ENCODE measurements at regions of chr4 and their contacts with region 1.

Region 1: DNA sequence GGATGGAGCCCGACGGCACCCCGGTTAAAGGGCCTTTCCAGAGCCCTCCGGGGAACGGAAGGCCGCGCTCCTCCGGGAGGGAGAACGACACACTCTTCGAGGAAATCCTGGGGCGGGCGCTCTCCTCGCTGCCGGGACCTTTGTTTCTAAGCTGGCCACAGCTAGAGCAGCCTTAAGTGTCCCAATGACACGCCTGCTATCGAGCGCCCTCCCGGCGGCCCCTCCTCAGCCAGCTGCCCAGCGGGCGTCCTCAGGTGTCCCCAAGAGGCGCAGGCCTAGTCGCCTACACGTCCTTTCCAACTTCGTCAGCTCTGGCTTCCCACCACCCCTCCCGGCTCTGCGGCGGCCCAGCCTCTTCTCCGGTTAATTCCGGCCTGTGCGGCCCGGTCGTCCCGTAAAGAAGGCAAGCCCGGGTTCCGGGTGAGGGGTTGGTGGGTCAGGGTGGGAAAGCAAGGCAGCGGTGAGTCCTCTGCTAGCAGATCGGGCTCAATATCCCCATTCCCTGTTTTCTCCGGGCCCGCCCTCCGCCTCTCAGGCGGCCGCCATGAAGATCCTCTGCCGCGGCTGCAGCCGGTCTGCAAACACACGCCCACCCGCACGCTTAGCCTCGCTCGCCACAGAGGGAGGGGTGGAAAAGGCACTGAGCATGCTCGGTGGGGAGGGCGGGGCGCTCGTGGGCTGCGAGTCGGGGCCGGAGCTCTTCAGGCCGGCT is 449 bp upstream of the RAP1GDS1 start:
- DNase-seq: peak; percentile 95
- H3K4me3 Mint-ChIP-seq: peak overlapping the region; percentile 89
- H3K27ac Mint-ChIP-seq: peak overlapping the region; percentile 86
- H3K4me1 Mint-ChIP-seq: peaks cover 35% of the 10 kb centered on the region
- H3K27me3 Mint-ChIP-seq: no peaks in the 10 kb centered on the region
- CTCF ChIP-seq: no peak

Region 2: DNA sequence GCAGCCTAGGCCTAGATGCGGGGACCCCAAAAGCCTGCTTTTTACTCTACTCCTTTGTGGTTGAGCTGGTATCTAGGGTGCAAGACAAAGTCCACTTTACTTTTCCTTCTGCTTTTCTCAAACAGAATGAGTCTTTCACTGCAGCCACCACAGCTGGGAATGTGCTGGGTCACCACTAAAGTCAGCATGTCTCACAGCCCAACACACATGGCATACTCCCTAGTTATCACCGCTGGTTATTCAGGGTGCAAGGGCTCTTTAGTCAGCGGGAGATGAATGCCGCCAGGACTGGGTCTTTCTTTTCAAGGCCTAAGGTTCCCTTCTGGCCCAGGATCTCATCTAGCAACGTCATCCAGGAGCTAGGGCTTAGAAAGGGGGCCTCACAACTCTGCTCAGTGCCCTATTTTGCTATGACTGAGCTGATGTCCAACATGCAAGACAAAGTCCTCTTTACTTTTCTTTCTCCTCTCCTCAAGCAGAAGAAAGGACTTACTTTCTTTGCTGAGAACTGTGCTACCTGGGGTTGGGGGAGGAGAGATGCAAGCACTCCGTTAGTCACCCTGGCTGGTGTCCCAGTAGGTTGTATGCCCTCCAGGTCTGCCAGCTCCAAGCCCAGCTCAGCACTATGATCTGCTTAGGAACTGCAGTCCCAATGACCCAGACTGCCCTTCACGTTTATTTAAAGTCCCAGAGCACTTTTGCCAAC is 94.6 kb before region 1 on chr4:
- CTCF ChIA-PET with region 1: interaction called, 3 read pairs
- POLR2A ChIA-PET with region 1: interaction called, 35 read pairs
- intact Hi-C with region 1: loop called (anchors 2 kb)
- DNase-seq: peak; percentile 93
- H3K4me3 Mint-ChIP-seq: no peak overlapping the region
- H3K27ac Mint-ChIP-seq: peak overlapping the region; percentile 35
- H3K4me1 Mint-ChIP-seq: peaks cover 9% of the 10 kb centered on the region
- H3K27me3 Mint-ChIP-seq: no peaks in the 10 kb centered on the region
- CTCF ChIP-seq: no peak

Region 3: GRCh38 chr4:98284640-98285046 is 23.9 kb after region 1 on chr4:
- CTCF ChIA-PET with region 1: interaction called, 5 read pairs
- POLR2A ChIA-PET with region 1: interaction called, 19 read pairs
- intact Hi-C with region 1: no loop called
- DNase-seq: peak; percentile 52
- H3K4me3 Mint-ChIP-seq: no peak overlapping the region
- H3K27ac Mint-ChIP-seq: no peak overlapping the region
- H3K4me1 Mint-ChIP-seq: peaks cover 4% of the 10 kb centered on the region
- H3K27me3 Mint-ChIP-seq: no peaks in the 10 kb centered on the region
- CTCF ChIP-seq: no peak

Region 4: DNA sequence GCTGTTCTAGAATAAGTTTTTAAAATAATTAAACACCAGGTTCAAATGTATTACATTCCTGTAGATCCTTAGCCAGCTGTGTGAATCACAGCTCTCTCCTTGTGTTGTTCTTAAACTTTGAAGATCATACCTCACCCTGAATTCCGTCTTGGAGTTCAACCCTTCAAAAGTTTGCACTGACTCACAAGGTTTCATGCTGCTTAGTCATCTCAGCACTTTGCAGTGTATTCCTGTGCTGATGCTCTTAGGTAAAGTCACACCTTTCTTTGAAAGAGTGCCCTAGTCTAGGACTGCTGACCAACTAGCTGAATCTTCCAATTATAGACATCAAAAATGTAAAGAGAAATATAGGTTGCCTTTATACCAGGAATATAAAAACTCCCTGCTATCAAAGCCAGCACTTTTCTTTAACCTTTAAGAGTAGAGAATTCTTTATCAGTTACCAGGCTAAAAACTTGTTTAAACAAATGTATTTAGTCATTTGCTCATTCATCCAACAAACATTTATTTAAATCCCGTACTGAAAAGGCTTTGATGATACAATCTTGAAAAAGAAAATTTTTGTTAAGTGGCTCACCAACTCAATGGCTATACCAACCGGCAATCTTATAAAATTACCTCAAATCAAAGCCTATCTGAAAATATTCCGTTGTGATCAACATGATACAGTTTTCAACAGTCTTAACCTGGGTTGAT is 170.1 kb after region 1 on chr4:
- CTCF ChIA-PET with region 1: interaction called, 3 read pairs
- POLR2A ChIA-PET with region 1: interaction called, 31 read pairs
- intact Hi-C with region 1: loop called (anchors 5 kb)
- DNase-seq: peak; percentile 89
- H3K4me3 Mint-ChIP-seq: no peak overlapping the region
- H3K27ac Mint-ChIP-seq: peak overlapping the region; percentile 73
- H3K4me1 Mint-ChIP-seq: peaks cover 17% of the 10 kb centered on the region
- H3K27me3 Mint-ChIP-seq: no peaks in the 10 kb centered on the region
- CTCF ChIP-seq: no peak

Region 5: GRCh38 chr4:98658287-98659105 is 397.8 kb after region 1 on chr4 and contains the start of gene TSPAN5:
- CTCF ChIA-PET with region 1: no interaction called
- POLR2A ChIA-PET with region 1: interaction called, 21 read pairs
- intact Hi-C with region 1: loop called (anchors 2 kb)
- DNase-seq: peak; percentile 74
- H3K4me3 Mint-ChIP-seq: peak within 1 kb of the TSS; percentile 81
- H3K27ac Mint-ChIP-seq: no peak within 1 kb of the TSS
- H3K4me1 Mint-ChIP-seq: peaks cover 50% of the 10 kb centered on the region
- H3K27me3 Mint-ChIP-seq: no peaks in the 10 kb centered on the region
- CTCF ChIP-seq: no peak
- total RNA-seq, gene TSPAN5: 18.5 and 19.8 TPM in 2 replicates

Measured in MCF 10A (cell line).